A673 (cell line): ENCODE measurements at regions of chr1 and their contacts with region 1.

Region 1: GRCh38 chr1:169928438-169929209 is 34.9 kb upstream of the SCYL3 start:
- DNase-seq: peak; percentile 59
- H3K4me3 ChIP-seq: no peak overlapping the region
- H3K27ac ChIP-seq: no peak overlapping the region
- H3K4me1 ChIP-seq: no peaks in the 10 kb centered on the region
- H3K27me3 ChIP-seq: no peaks in the 10 kb centered on the region
- CTCF ChIP-seq: peak; percentile 80

Region 2: DNA sequence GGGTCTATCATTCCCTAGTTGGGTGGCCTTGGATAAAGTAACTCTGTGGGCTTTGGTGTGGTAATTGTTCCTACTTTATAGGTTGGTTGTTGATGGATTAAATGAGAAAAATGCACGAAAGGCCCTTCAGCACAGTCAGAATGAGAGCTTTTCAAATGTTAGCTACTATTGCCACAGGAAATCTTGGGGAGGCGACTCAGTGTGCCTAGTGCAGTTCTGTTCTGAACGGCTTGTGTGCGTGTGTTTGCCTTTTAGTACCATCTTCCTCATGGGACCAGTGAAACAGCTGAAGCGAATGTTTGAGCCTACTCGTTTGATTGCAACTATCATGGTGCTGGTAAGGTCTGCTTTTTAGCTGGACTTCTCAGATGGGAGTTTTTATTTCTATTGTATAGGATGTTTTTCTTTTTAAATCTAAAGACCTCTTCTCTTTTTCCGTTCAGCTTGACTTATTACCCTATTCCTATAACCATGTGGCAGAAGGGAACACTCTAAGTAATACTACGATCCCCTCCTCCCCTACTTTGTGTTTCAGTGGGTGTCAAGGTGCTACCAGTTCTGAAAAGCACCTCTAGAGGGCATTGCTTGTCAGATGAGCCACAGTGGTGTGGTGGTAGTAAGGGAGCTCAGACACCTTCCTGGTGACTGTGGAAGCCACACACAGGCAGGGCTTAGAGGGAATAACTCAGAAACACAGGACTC is 1693.6 kb before region 1 on chr1:
- CTCF ChIA-PET with region 1: no interaction called
- POLR2A ChIA-PET with region 1: no interaction called
- intact Hi-C with region 1: no loop called
- DNase-seq: peak; percentile 67
- H3K4me3 ChIP-seq: no peak overlapping the region
- H3K27ac ChIP-seq: no peak overlapping the region
- H3K4me1 ChIP-seq: no peaks in the 10 kb centered on the region
- H3K27me3 ChIP-seq: no peaks in the 10 kb centered on the region
- CTCF ChIP-seq: peak; percentile 75

Region 3: GRCh38 chr1:169974067-169974466 is 45.4 kb after region 1 on chr1:
- CTCF ChIA-PET with region 1: no interaction called
- POLR2A ChIA-PET with region 1: no interaction called
- intact Hi-C with region 1: no loop called
- DNase-seq: no peak
- H3K4me3 ChIP-seq: no peak overlapping the region
- H3K27ac ChIP-seq: no peak overlapping the region
- H3K4me1 ChIP-seq: no peaks in the 10 kb centered on the region
- H3K27me3 ChIP-seq: no peaks in the 10 kb centered on the region
- CTCF ChIP-seq: no peak

Region 4: GRCh38 chr1:170436928-170437327 is 508.3 kb after region 1 on chr1:
- CTCF ChIA-PET with region 1: no interaction called
- POLR2A ChIA-PET with region 1: no interaction called
- intact Hi-C with region 1: loop called (anchors 10 kb)
- DNase-seq: no peak
- H3K4me3 ChIP-seq: no peak overlapping the region
- H3K27ac ChIP-seq: no peak overlapping the region
- H3K4me1 ChIP-seq: no peaks in the 10 kb centered on the region
- H3K27me3 ChIP-seq: no peaks in the 10 kb centered on the region
- CTCF ChIP-seq: peak; percentile 20; the same call in 1 of the 2 replicates

Region 5: DNA sequence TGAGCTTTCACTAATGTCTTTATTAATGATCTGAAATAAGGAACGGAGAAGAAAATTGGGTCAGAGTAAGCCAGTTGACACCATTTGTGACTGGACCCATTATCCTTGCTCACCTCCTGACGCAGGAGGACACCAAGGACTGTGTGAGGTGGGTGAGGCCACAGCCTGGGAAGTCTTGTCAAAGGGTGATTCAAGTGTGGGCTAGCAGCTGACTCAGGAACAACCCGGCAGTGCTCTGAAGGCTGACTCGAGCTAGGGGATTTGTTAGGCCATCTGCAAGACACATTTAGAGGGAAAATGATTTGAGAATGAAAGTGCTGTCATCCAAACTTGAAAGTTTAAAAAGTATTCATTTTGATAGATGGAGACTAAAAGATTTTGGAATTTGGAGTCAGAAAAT is 756.5 kb after region 1 on chr1:
- CTCF ChIA-PET with region 1: no interaction called
- POLR2A ChIA-PET with region 1: no interaction called
- intact Hi-C with region 1: loop called (anchors 10 kb)
- DNase-seq: no peak
- H3K4me3 ChIP-seq: no peak overlapping the region
- H3K27ac ChIP-seq: no peak overlapping the region
- H3K4me1 ChIP-seq: no peaks in the 10 kb centered on the region
- H3K27me3 ChIP-seq: peaks cover 3% of the 10 kb centered on the region
- CTCF ChIP-seq: no peak

Region 6: DNA sequence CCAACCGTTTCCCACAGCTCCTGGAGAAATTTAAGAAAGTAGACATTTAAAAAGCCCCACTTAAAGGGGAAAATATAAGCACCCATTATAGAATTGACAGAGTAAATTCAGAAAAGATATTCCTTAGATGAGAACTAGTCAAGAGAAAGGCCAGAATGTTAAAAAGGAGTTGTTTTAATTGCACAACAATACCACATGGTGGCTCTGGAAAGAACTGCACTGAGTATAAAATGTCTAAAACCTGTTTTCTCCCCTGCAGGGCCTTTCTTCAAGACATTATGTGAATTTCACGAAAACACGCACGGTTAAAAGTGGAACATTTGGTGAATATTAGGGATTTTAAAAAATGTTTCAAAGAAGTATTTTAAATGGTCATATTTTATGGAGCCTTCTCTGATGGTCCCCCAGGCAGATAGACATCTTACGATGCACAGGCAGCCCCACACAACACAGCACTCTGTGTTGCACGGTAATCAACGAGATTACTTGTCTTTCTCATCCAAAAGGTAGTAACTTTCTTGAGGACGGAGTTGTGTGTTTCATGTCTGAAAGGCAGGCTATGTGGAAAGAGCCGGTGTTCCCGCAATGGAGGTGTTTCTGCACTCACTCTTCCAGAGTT is 837.2 kb after region 1 on chr1:
- CTCF ChIA-PET with region 1: no interaction called
- POLR2A ChIA-PET with region 1: no interaction called
- intact Hi-C with region 1: loop called (anchors 5 kb)
- DNase-seq: peak; percentile 48
- H3K4me3 ChIP-seq: no peak overlapping the region
- H3K27ac ChIP-seq: no peak overlapping the region
- H3K4me1 ChIP-seq: no peaks in the 10 kb centered on the region
- H3K27me3 ChIP-seq: no peaks in the 10 kb centered on the region
- CTCF ChIP-seq: peak; percentile 67

Region 7: GRCh38 chr1:170881268-170882265 is 952.9 kb after region 1 on chr1:
- CTCF ChIA-PET with region 1: no interaction called
- POLR2A ChIA-PET with region 1: no interaction called
- intact Hi-C with region 1: loop called (anchors 2 kb)
- DNase-seq: peak; percentile 48
- H3K4me3 ChIP-seq: no peak overlapping the region
- H3K27ac ChIP-seq: no peak overlapping the region
- H3K4me1 ChIP-seq: no peaks in the 10 kb centered on the region
- H3K27me3 ChIP-seq: peaks cover 3% of the 10 kb centered on the region
- CTCF ChIP-seq: peak; percentile 63

Region 8: GRCh38 chr1:170929835-170930554 is 1001.4 kb after region 1 on chr1:
- CTCF ChIA-PET with region 1: no interaction called
- POLR2A ChIA-PET with region 1: no interaction called
- intact Hi-C with region 1: loop called (anchors 2 kb)
- DNase-seq: peak; percentile 71
- H3K4me3 ChIP-seq: no peak overlapping the region
- H3K27ac ChIP-seq: no peak overlapping the region
- H3K4me1 ChIP-seq: no peaks in the 10 kb centered on the region
- H3K27me3 ChIP-seq: peaks cover 8% of the 10 kb centered on the region
- CTCF ChIP-seq: peak; percentile 77